ENCODE measurements at regions of chr1 and their contacts with region 1.

Region 1: GRCh38 chr1:68120136-68120791 is 69.8 kb upstream of the DIRAS3 start:
- DNase-seq: peak in 1 of 2 experiments; percentile 68
- H3K4me3 ChIP-seq: no peak overlapping the region
- H3K4me3 Mint-ChIP-seq: no peak overlapping the region
- H3K27ac Mint-ChIP-seq: no peak overlapping the region
- H3K4me1 ChIP-seq: no peaks in the 10 kb centered on the region
- H3K4me1 Mint-ChIP-seq: no peaks in the 10 kb centered on the region
- H3K27me3 ChIP-seq: no peaks in the 10 kb centered on the region
- H3K27me3 Mint-ChIP-seq: no peaks in the 10 kb centered on the region
- CTCF ChIP-seq: peak; percentile 47 to 81

Region 2: DNA sequence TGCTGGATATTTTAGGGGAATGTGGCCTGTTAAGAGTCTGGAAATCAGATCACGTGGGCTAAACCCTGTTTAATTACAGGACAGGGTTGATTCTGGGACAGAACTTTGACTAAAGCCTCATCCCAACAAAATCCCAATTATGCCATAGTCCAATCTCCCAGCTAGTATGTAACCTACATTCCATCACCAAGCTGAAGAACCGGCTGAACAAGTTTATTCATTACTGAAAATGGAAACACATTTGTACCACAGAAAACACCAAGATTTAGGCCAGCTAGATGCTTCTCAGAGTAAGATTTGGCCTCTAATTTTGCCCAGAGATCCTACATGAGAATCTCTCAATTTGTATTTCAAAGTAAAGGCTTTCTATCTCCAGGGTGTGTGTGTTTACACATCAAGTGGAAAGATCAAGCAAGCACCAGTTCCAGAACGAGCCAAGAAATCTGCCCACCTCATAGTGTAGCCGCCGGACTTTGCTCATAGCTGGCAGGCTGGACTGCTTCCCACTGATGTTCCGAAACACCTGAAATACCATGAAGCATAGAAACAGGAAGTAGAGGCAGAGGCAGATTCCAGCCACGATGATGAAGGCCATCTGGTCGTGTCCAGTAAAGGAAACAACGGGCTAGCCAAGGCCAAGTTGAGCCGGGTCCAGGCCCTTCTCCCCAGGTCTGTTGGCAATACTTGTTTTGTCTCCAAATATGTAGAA is 25.3 kb after region 1 on chr1:
- CTCF ChIA-PET with region 1: no interaction called
- POLR2A ChIA-PET with region 1: no interaction called
- intact Hi-C with region 1: loop called (anchors 1 kb)
- DNase-seq: peak; percentile 52 to 57
- H3K4me3 ChIP-seq: no peak overlapping the region
- H3K4me3 Mint-ChIP-seq: peak overlapping the region; percentile 27
- H3K27ac Mint-ChIP-seq: peak overlapping the region; percentile 67
- H3K4me1 ChIP-seq: peaks cover 18% of the 10 kb centered on the region
- H3K4me1 Mint-ChIP-seq: peaks cover 11% of the 10 kb centered on the region
- H3K27me3 ChIP-seq: no peaks in the 10 kb centered on the region
- H3K27me3 Mint-ChIP-seq: no peaks in the 10 kb centered on the region
- CTCF ChIP-seq: no peak

Region 3: DNA sequence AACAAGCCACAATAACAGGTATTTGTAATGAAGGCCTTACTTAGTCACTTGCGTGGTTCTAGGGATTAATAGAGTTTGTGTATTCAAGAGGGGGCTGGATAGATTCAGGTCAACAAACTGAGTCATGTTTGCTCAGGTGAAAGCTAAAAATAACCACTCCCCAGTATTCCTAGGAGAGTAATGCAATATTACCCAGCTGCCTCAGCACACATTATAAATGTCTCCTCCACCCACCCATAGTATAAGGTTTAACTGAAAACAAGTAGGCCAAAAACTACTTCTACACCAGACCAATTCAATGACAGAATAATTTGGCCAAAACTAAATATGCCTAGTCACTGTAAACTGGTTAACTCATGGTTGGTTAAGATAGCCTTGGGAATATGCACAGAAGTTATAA is 77.6 kb after region 1 on chr1:
- CTCF ChIA-PET with region 1: interaction called, 6 read pairs
- POLR2A ChIA-PET with region 1: no interaction called
- intact Hi-C with region 1: loop called (anchors 10 kb)
- DNase-seq: peak in 1 of 2 experiments; percentile 34
- H3K4me3 ChIP-seq: no peak overlapping the region
- H3K4me3 Mint-ChIP-seq: peak overlapping the region; percentile 58
- H3K27ac Mint-ChIP-seq: peak overlapping the region; percentile 85
- H3K4me1 ChIP-seq: peaks cover 37% of the 10 kb centered on the region
- H3K4me1 Mint-ChIP-seq: peaks cover 26% of the 10 kb centered on the region
- H3K27me3 ChIP-seq: no peaks in the 10 kb centered on the region
- H3K27me3 Mint-ChIP-seq: no peaks in the 10 kb centered on the region
- CTCF ChIP-seq: no peak

Region 4: DNA sequence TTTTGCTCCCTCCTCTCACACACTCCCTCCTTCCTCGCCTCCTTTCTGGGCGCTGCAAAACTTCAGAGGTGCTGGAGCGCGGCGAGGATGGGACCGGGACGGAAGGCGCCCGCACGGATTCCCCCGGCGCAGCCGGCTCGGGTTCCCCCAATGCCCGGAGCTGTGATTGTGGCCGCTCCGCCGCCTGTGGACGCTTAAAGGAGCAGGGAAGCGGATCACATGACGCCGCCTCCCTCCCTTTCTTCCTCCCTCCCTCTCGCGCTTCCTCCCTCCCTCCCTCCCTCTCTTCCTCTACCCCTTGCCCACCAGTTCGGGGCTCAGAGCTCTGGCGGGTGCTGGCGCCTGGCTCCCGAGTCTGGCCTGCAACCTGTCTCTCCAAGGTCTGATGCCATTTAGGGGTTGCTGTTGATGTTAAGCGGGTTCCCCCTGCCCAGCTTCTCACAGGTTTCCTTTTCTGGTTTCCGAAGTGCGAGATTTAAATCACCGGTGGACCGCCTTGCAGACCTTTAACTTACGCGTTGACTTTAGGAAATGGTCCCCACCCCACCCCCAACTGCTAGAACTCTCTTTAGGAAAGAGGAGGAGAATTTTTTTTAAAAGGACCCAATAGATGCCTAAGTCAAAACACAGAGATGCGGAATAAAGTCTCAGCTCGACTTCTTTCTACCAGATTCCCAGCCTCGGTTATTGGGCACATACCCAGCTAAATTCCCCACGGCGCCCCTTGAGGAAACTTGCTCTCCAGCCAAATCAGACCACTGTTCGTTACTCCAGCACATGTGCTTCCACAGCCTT is 112.3 kb after region 1 on chr1 and contains the start of gene WLS:
- CTCF ChIA-PET with region 1: interaction called, 18 read pairs
- POLR2A ChIA-PET with region 1: no interaction called
- intact Hi-C with region 1: loop called (anchors 5 kb)
- DNase-seq: peak; percentile 65 to 73
- H3K4me3 ChIP-seq: peak within 1 kb of the TSS; percentile 67
- H3K4me3 Mint-ChIP-seq: peak within 1 kb of the TSS; percentile 73
- H3K27ac Mint-ChIP-seq: peak within 1 kb of the TSS; percentile 75
- H3K4me1 ChIP-seq: no peaks in the 10 kb centered on the region
- H3K4me1 Mint-ChIP-seq: no peaks in the 10 kb centered on the region
- H3K27me3 ChIP-seq: no peaks in the 10 kb centered on the region
- H3K27me3 Mint-ChIP-seq: no peaks in the 10 kb centered on the region
- CTCF ChIP-seq: peak in 1 of 2 experiments; percentile 0
- total RNA-seq, gene WLS: 70.6 and 72.3 TPM in 2 replicates

Region 5: DNA sequence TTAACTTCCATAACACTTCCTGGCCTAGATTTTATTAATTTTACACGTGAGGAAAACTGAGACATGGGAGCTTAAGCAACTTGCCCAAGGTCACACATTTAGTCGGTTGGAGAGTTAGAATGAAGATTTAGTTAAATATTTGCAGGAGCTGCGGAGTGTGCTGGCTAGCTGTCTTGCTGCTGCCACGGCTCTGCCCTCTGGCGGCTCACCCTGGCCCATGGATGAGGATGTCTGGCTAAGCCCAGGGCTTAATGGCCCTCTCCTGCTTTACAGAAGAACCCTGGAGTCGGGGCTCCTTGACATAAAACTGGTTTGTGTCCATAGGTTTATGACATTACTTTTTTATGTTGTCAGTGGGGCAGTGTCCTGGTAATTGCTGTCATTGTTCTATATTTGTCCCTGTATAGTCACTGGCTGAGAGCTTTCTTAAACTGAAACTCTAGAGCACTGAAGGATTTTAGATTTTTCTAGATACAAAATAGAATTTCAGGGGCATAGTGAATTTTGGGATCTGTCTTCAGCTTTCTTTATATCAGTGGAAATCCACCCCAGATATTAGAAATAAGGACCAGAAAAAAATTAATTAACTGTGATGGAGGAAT is 200.9 kb after region 1 on chr1:
- CTCF ChIA-PET with region 1: interaction called, 47 read pairs
- POLR2A ChIA-PET with region 1: no interaction called
- intact Hi-C with region 1: loop called (anchors 1 kb)
- DNase-seq: peak; percentile 70 to 74
- H3K4me3 ChIP-seq: no peak overlapping the region
- H3K4me3 Mint-ChIP-seq: no peak overlapping the region
- H3K27ac Mint-ChIP-seq: no peak overlapping the region
- H3K4me1 ChIP-seq: no peaks in the 10 kb centered on the region
- H3K4me1 Mint-ChIP-seq: no peaks in the 10 kb centered on the region
- H3K27me3 ChIP-seq: no peaks in the 10 kb centered on the region
- H3K27me3 Mint-ChIP-seq: no peaks in the 10 kb centered on the region
- CTCF ChIP-seq: peak; percentile 46 to 81

Region 6: DNA sequence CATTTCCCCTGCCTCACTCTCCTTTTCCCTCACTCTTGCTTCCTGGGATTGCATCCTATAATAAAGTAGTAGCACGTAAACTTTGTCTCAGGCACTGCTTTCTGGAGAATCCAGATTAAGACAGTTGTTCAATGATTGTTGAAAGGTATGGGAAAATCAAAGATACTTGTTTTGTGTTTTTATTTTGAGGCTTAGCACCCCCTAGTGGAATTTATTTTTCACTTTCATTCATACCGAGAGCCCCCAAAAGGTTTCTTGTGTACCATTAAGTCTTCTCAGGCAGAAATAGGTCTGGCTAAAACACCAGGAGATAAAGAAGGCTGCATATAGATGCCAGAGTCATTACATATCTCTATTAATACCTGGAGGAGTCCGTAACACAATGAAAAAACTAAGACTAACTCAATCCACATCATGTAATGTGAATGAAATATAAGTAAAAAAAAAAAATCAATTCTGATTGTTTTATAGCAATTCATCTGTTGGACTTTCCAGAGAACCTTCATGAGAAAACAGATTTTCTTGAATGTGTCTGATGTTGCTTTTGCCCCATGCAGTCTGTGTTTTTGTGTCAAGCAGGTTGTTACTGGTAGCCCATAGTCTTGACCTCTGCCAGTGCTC is 226.0 kb after region 1 on chr1:
- CTCF ChIA-PET with region 1: interaction called, 8 read pairs
- POLR2A ChIA-PET with region 1: no interaction called
- intact Hi-C with region 1: loop called (anchors 1 kb)
- DNase-seq: peak in 1 of 2 experiments; percentile 1
- H3K4me3 ChIP-seq: no peak overlapping the region
- H3K4me3 Mint-ChIP-seq: no peak overlapping the region
- H3K27ac Mint-ChIP-seq: no peak overlapping the region
- H3K4me1 ChIP-seq: no peaks in the 10 kb centered on the region
- H3K4me1 Mint-ChIP-seq: no peaks in the 10 kb centered on the region
- H3K27me3 ChIP-seq: no peaks in the 10 kb centered on the region
- H3K27me3 Mint-ChIP-seq: peaks cover 4% of the 10 kb centered on the region
- CTCF ChIP-seq: peak; percentile 15 to 34

Region 7: GRCh38 chr1:68442822-68443556 is 322.7 kb after region 1 on chr1:
- CTCF ChIA-PET with region 1: interaction called, 3 read pairs
- POLR2A ChIA-PET with region 1: no interaction called
- intact Hi-C with region 1: loop called (anchors 2 kb)
- DNase-seq: peak in 1 of 2 experiments; percentile 35
- H3K4me3 ChIP-seq: no peak overlapping the region
- H3K4me3 Mint-ChIP-seq: no peak overlapping the region
- H3K27ac Mint-ChIP-seq: no peak overlapping the region
- H3K4me1 ChIP-seq: no peaks in the 10 kb centered on the region
- H3K4me1 Mint-ChIP-seq: peaks cover 6% of the 10 kb centered on the region
- H3K27me3 ChIP-seq: no peaks in the 10 kb centered on the region
- H3K27me3 Mint-ChIP-seq: peaks cover 12% of the 10 kb centered on the region
- CTCF ChIP-seq: peak; percentile 32 to 34

Measured in Caco-2 (cell line).